G401 (cell line): ENCODE measurements at regions of chr18 and their contacts with region 1.

Region 1: DNA sequence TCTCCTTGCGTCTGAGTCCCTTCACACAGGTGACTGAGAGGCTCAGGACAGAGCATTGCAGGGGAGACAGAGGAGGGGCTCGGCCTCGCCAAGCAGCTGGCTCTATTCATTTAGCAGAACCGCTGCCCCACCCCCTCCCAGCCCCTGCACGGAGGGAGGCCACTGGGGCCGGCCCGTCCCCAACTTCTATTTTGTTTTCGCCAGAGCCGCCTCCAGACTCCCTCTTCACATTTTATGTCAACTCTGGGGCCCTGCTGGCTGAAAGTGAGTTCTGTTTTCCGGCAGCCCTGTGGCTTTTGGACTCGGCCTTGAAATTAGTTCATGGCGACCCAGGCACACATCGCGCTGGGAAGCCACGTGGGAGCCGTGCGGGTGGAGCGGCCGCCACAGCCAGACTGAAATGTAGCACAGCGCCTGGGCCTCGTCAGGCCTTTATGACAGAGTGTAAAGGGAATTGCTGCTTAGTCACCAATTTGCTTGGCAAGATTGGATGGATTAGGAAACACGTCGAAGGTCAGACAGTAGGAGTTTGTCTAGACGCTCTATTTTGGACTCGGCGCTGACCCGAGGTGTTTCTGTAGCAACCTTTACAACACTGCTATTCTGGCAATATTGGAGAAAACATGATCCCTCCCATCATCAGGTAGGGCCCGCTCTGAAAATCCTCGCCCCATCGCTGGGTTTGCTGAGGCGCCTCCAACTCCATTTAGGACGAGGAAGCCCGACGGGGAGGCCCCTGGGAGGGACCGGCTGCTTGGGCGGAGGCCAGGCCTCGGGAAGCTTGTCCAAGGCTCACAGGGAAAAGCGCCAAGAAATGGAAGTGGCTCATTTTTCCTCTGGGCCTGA is 90.7 kb upstream of the CTDP1 start:
- DNase-seq: peak; percentile 11

Region 2: GRCh38 chr18:79380816-79381806 is 207.7 kb before region 1 on chr18:
- in situ Hi-C with region 1: loop called (anchors 10 kb)
- DNase-seq: peak; percentile 56

Region 3: DNA sequence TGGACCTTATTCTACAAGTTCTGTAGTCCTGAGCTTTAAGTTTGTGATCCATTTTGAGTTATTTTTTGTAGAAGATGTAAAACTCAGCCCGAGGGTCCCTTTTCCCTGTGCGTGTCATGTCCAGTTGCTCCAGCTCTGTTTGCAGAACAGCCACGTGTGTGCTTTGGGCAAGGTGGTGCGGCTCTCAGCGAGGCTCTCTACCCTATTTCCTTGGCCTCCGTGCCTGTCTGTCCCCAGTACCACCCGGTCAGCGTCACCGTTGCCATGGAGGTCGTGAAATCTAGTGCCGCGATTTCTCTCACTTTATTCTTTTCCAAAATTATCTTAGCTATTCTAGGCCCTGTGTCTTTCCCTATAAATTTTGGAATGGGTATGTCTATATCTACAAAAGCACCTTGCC is 50.2 kb before region 1 on chr18:
- in situ Hi-C with region 1: loop called (anchors 5 kb)
- DNase-seq: no peak

Region 4: GRCh38 chr18:79664675-79665081 is 75.8 kb after region 1 on chr18:
- in situ Hi-C with region 1: no loop called
- DNase-seq: no peak